AG04450 (cell line): ENCODE measurements at regions of chr14 and their contacts with region 1.

Region 1: DNA sequence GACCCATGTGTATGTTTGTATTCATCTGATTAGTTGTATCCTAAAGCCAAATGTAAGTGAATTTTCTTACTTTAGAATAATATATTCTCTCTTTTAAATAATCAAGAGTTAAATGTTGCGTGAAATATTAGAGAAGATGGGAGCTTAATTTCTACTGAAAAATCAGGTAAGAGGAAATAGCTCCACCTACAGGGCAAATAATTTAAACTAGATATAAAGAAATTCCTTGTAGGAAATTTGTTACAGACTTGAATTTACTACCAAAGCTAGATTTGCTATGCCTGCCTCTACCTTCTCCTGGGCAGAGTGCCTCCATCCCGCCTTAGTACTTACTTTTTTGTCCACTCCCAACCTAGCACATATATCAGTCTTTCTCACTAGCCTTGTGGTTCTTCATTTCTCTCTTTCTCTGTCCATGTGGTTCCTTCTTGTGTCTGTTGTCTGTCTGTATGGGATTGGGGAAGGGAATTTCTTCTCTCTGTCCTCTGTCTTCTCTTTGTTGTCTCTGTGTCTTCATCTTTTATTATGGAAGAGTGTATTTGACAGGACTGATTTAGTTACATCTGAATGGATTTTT is 44.7 kb downstream of the PALS1 start:
- DNase-seq: peak; percentile 16
- H3K4me3 ChIP-seq: no peak overlapping the region
- H3K27ac ChIP-seq: no peak overlapping the region
- H3K27me3 ChIP-seq: no peaks in the 10 kb centered on the region
- CTCF ChIP-seq: peak; percentile 45

Region 2: DNA sequence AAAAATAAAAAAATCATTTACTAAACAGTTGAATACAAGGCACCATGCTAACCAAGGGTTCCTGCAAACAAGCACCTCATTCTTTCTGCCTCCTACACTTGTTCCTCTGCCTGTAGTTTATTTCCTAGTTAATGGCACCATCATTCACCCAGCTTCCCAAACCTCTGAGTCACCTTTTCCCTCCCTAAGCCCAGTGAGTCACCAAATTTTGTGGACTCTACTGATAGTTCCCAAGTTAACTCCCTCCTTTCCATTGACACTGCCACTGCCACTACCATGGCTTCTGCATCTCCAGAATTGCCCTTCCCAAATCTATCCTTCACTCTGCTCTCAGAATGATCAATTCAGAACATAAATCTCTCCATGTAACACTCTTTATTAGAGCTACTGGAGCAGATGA is 98.8 kb before region 1 on chr14:
- CTCF ChIA-PET with region 1: interaction called, 10 read pairs
- POLR2A ChIA-PET with region 1: no interaction called
- DNase-seq: no peak
- H3K4me3 ChIP-seq: no peak overlapping the region
- H3K27ac ChIP-seq: no peak overlapping the region
- H3K27me3 ChIP-seq: no peaks in the 10 kb centered on the region
- CTCF ChIP-seq: no peak

Region 3: DNA sequence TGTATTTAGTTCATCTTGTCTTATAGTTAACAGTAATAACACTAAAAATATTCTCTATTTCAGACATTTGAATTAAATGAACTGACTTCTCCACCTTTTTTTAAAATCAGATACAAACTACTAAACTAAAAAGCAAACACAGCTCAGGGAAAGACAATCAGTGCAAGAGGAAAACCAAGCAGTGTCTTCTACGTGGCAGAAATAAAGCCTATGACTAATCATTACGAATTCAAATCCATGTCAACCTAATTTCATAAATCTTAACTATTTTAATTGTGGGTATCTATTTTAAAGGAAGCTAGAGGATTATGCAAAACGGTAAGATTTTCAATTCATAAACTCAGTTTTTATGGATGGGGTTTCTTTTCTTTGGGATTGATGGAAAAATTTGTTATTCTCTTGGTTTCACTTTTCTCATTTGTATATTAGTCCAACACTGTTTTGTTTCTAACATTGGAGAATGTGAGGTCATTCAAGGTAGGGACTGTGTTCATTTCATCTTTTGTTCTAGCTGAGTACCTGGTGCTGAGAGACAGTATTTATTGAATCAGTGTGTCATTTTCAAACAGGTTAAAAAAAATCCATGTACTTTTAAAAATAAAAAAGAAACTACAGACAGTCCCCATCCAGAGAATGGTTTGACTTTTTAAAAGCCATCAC is 57.5 kb before region 1 on chr14:
- CTCF ChIA-PET with region 1: interaction called, 14 read pairs
- POLR2A ChIA-PET with region 1: no interaction called
- DNase-seq: no peak
- H3K4me3 ChIP-seq: no peak overlapping the region
- H3K27ac ChIP-seq: no peak overlapping the region
- H3K27me3 ChIP-seq: no peaks in the 10 kb centered on the region
- CTCF ChIP-seq: no peak

Region 4: GRCh38 chr14:67269298-67270061 is 16.5 kb before region 1 on chr14:
- CTCF ChIA-PET with region 1: interaction called, 33 read pairs
- POLR2A ChIA-PET with region 1: no interaction called
- DNase-seq: peak; percentile 60
- H3K4me3 ChIP-seq: peak overlapping the region; percentile 42
- H3K27ac ChIP-seq: peak overlapping the region; percentile 49
- H3K27me3 ChIP-seq: no peaks in the 10 kb centered on the region
- CTCF ChIP-seq: no peak

Region 5: GRCh38 chr14:67428501-67429031 is 142.6 kb after region 1 on chr14:
- CTCF ChIA-PET with region 1: no interaction called
- POLR2A ChIA-PET with region 1: no interaction called
- DNase-seq: peak; percentile 27
- H3K4me3 ChIP-seq: no peak overlapping the region
- H3K27ac ChIP-seq: no peak overlapping the region
- H3K27me3 ChIP-seq: peaks cover 16% of the 10 kb centered on the region
- CTCF ChIP-seq: peak; percentile 7; the same call in 1 of the 2 replicates

Region 6: DNA sequence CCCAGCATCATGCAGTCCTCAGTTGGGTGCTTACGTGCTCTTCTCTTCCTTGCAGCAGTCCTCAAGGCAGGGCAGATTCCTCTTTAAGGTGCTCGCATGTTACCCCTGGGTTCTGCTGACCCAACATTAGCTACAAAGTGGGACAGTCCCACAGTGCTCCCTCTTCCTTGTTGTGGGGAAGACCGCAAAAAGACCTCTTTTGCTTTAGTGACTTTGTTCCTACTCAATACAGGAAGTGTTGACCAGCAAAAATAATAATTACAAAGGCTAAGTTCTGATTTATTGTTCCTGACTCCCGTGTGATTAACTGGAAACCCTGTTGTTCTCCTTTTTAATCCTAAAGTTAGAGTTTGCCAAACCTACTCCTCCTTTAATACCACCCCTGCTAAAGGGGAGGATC is 300.4 kb after region 1 on chr14:
- CTCF ChIA-PET with region 1: no interaction called
- POLR2A ChIA-PET with region 1: no interaction called
- DNase-seq: no peak
- H3K4me3 ChIP-seq: no peak overlapping the region
- H3K27ac ChIP-seq: no peak overlapping the region
- H3K27me3 ChIP-seq: peaks cover 3% of the 10 kb centered on the region
- CTCF ChIP-seq: no peak